Caco-2 (cell line): ENCODE measurements at regions of chr4 and their contacts with region 1.

Region 1: GRCh38 chr4:105666693-105667092 is 41.8 kb downstream of the INTS12 start:
- DNase-seq: peak in 1 of 2 experiments; percentile 22
- H3K4me3 ChIP-seq: no peak overlapping the region
- H3K4me3 Mint-ChIP-seq: no peak overlapping the region
- H3K27ac Mint-ChIP-seq: no peak overlapping the region
- H3K4me1 ChIP-seq: no peaks in the 10 kb centered on the region
- H3K4me1 Mint-ChIP-seq: no peaks in the 10 kb centered on the region
- H3K27me3 ChIP-seq: no peaks in the 10 kb centered on the region
- H3K27me3 Mint-ChIP-seq: no peaks in the 10 kb centered on the region
- CTCF ChIP-seq: peak; percentile 40 to 41

Region 2: GRCh38 chr4:105140684-105141490 is 525.8 kb before region 1 on chr4:
- CTCF ChIA-PET with region 1: no interaction called
- POLR2A ChIA-PET with region 1: no interaction called
- intact Hi-C with region 1: loop called (anchors 1 kb)
- DNase-seq: peak in 1 of 2 experiments; percentile 49
- H3K4me3 ChIP-seq: no peak overlapping the region
- H3K4me3 Mint-ChIP-seq: no peak overlapping the region
- H3K27ac Mint-ChIP-seq: no peak overlapping the region
- H3K4me1 ChIP-seq: peaks cover under 1% of the 10 kb centered on the region; the same call in 1 of the 2 replicates
- H3K4me1 Mint-ChIP-seq: no peaks in the 10 kb centered on the region
- H3K27me3 ChIP-seq: no peaks in the 10 kb centered on the region
- H3K27me3 Mint-ChIP-seq: peaks cover 2% of the 10 kb centered on the region
- CTCF ChIP-seq: peak; percentile 51 to 54

Region 3: GRCh38 chr4:105191621-105192210 is 475.0 kb before region 1 on chr4:
- CTCF ChIA-PET with region 1: no interaction called
- POLR2A ChIA-PET with region 1: no interaction called
- intact Hi-C with region 1: no loop called
- DNase-seq: no peak
- H3K4me3 ChIP-seq: no peak overlapping the region
- H3K4me3 Mint-ChIP-seq: no peak overlapping the region
- H3K27ac Mint-ChIP-seq: no peak overlapping the region
- H3K4me1 ChIP-seq: peaks cover 12% of the 10 kb centered on the region
- H3K4me1 Mint-ChIP-seq: peaks cover 11% of the 10 kb centered on the region
- H3K27me3 ChIP-seq: no peaks in the 10 kb centered on the region
- H3K27me3 Mint-ChIP-seq: no peaks in the 10 kb centered on the region
- CTCF ChIP-seq: no peak

Region 4: DNA sequence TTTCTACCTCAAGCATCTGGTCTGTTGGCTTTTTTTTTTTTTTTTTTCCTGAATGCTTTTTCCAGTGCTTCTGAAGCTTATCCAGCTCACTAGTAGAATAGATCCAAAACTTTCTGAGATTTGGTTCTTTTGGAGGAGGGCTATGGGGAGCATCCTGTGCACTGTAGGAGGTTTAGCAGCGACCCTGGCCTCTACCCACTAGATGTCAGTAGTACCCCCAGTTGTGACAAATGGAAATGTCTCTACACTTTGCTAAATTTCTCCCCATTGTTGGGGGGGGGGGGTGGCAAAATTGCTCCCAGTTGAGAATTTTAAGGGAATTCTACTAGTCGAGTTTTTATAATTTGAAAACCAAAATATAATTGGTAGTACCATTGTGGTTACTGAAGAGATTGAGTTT is 169.8 kb before region 1 on chr4:
- CTCF ChIA-PET with region 1: interaction called, 3 read pairs
- POLR2A ChIA-PET with region 1: no interaction called
- intact Hi-C with region 1: loop called (anchors 1 kb)
- DNase-seq: peak in 1 of 2 experiments; percentile 24
- H3K4me3 ChIP-seq: no peak overlapping the region
- H3K4me3 Mint-ChIP-seq: no peak overlapping the region
- H3K27ac Mint-ChIP-seq: no peak overlapping the region
- H3K4me1 ChIP-seq: no peaks in the 10 kb centered on the region
- H3K4me1 Mint-ChIP-seq: no peaks in the 10 kb centered on the region
- H3K27me3 ChIP-seq: no peaks in the 10 kb centered on the region
- H3K27me3 Mint-ChIP-seq: no peaks in the 10 kb centered on the region
- CTCF ChIP-seq: peak; percentile 32 to 57

Region 5: GRCh38 chr4:105520817-105521790 is 145.6 kb before region 1 on chr4:
- CTCF ChIA-PET with region 1: interaction called, 19 read pairs
- POLR2A ChIA-PET with region 1: no interaction called
- intact Hi-C with region 1: loop called (anchors 1 kb)
- DNase-seq: peak in 1 of 2 experiments; percentile 61
- H3K4me3 ChIP-seq: no peak overlapping the region
- H3K4me3 Mint-ChIP-seq: no peak overlapping the region
- H3K27ac Mint-ChIP-seq: no peak overlapping the region
- H3K4me1 ChIP-seq: no peaks in the 10 kb centered on the region
- H3K4me1 Mint-ChIP-seq: no peaks in the 10 kb centered on the region
- H3K27me3 ChIP-seq: no peaks in the 10 kb centered on the region
- H3K27me3 Mint-ChIP-seq: no peaks in the 10 kb centered on the region
- CTCF ChIP-seq: peak; percentile 56 to 69

Region 6: GRCh38 chr4:105951198-105951597 is 284.5 kb after region 1 on chr4:
- CTCF ChIA-PET with region 1: no interaction called
- POLR2A ChIA-PET with region 1: no interaction called
- intact Hi-C with region 1: no loop called
- DNase-seq: no peak
- H3K4me3 ChIP-seq: no peak overlapping the region
- H3K4me3 Mint-ChIP-seq: no peak overlapping the region
- H3K27ac Mint-ChIP-seq: no peak overlapping the region
- H3K4me1 ChIP-seq: no peaks in the 10 kb centered on the region
- H3K4me1 Mint-ChIP-seq: no peaks in the 10 kb centered on the region
- H3K27me3 ChIP-seq: no peaks in the 10 kb centered on the region
- H3K27me3 Mint-ChIP-seq: no peaks in the 10 kb centered on the region
- CTCF ChIP-seq: no peak